Naive thymus-derived CD4-positive, alpha-beta T cell (primary cell): ENCODE measurements at regions of chr9 and their contacts with region 1.

Region 1: DNA sequence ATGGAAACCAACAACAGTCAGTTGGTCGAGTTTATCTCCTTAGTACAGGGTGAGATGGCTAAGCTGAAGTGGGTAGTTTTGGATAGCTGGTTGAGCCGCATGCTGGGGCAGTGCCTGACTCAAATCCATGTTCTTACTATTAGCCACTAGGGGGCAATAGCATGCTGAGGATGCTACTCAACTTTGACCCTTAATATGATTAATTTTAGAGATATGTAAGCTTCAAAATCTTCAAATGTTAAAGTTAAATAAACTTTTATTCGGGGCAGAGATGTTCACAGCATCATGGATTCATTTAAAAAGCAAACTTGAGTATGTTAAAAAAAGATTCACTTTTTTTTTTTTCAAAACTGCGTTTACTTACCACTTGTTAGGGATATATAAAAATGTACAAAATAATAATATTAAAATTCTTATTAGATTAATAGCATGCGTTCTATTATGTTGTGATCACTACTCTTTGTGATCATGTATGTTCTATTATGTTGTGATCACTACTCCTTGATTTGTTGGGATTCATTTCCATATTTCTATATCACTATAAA is 57.0 kb downstream of the C9orf153 start:
- DNase-seq: peak in 6 of 9 donors; percentile 3 to 31 (median 10)
- ATAC-seq: peak; percentile 75
- H3K4me3 ChIP-seq: no peak overlapping the region
- H3K4me3 Mint-ChIP-seq: no peak overlapping the region
- H3K27ac ChIP-seq: no peak overlapping the region
- H3K27ac Mint-ChIP-seq: no peak overlapping the region
- H3K4me1 ChIP-seq: no peaks in the 10 kb centered on the region
- H3K4me1 Mint-ChIP-seq: no peaks in the 10 kb centered on the region
- H3K27me3 ChIP-seq: no peaks in the 10 kb centered on the region
- H3K27me3 Mint-ChIP-seq: peaks cover 0 to 17% (median 6%) of the 10 kb centered on the region in 5 donors

Region 2: GRCh38 chr9:86168256-86168655 is 34.2 kb before region 1 on chr9:
- CTCF ChIA-PET with region 1: no interaction called
- POLR2A ChIA-PET with region 1: no interaction called
- intact Hi-C with region 1: no loop called
- DNase-seq: no peak
- ATAC-seq: no peak
- H3K4me3 ChIP-seq: no peak overlapping the region
- H3K4me3 Mint-ChIP-seq: no peak overlapping the region
- H3K27ac ChIP-seq: no peak overlapping the region
- H3K27ac Mint-ChIP-seq: no peak overlapping the region
- H3K4me1 ChIP-seq: no peaks in the 10 kb centered on the region
- H3K4me1 Mint-ChIP-seq: peaks cover 0 to 1% (median 0%) of the 10 kb centered on the region in 7 donors
- H3K27me3 ChIP-seq: no peaks in the 10 kb centered on the region
- H3K27me3 Mint-ChIP-seq: peaks cover 0 to 8% (median 4%) of the 10 kb centered on the region in 5 donors

Region 3: DNA sequence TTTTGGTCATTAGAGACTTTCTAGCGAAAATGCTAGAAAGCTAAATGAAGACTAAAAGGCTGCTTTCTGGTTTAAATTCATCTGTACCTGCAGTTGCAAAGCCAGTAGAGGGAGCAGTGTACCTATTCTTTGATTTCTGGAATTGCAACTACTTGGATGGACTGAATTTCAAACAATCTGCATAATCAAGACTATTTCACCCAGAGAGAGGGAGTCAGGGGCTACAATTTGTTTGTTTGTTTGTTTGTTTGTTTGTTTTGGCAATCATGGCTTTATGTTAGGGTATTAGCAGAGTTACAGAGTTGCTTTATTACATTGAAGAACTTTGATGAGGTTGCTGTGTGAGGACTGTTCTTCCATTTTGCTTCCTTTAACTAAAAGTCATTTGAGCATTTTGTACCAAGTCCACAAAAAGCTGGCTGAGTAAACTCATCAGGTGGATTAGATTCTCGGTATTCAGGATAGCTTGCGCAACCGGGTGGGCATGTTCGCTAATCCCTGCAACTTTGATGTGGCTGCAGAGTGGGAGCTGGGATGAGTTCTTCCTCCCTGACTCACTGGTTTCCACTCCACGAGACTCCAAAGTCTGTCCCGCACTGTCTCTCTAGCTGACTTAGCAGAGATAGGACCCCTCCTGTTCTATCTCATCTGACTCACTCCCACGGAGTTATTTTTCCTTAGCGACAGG is 231.8 kb after region 1 on chr9:
- CTCF ChIA-PET with region 1: no interaction called
- POLR2A ChIA-PET with region 1: no interaction called
- intact Hi-C with region 1: loop called in 1 of 2 experiments (anchors 5 kb)
- DNase-seq: peak in 5 of 9 donors; percentile 7 to 28 (median 16)
- ATAC-seq: no peak
- H3K4me3 ChIP-seq: no peak overlapping the region
- H3K4me3 Mint-ChIP-seq: no peak overlapping the region
- H3K27ac ChIP-seq: no peak overlapping the region
- H3K27ac Mint-ChIP-seq: no peak overlapping the region
- H3K4me1 ChIP-seq: no peaks in the 10 kb centered on the region
- H3K4me1 Mint-ChIP-seq: no peaks in the 10 kb centered on the region
- H3K27me3 ChIP-seq: peaks cover 0 to 4% of the 10 kb centered on the region in 2 donors
- H3K27me3 Mint-ChIP-seq: peaks cover 2 to 40% (median 31%) of the 10 kb centered on the region in 5 donors

Region 4: DNA sequence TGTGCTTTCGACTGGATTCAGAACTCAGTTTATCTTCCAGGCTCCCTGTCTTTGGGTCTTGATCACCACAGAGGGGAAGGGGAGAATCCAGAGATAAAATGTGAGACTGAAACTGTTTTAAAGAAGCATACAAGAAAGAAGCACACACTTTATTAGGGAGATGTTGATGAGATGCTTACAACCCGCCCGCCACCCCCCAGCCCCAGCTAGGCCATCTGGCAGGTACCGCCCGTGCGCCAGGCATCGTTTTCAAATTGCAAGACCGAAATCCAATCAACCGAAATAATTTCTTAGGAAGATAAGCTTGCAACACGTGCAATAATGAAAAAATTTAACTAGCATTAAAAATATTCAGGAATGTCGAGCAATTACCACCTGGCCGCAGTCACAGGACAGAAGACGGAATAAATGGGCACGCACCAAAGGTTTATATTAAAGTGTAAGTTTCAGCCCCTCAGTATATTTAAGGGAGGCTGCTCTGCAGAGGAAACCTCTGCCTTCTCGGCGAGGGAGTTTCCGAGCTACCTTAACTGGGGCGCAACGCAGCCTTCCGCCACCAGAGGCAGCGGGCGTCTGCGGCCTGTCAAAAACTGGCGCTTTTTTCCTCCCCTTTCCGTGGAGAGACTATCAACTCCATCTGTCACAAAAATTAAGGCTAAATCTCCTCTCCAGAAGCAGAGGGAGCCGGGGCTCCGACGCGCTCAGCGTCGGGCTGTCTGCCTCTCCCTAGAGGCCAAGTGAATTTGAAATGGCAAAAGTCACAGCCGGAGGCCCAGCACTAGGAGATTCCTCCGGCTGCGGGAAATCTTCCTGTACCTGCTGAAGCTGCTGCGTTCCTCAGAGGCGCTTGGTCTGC is 745.9 kb after region 1 on chr9:
- CTCF ChIA-PET with region 1: no interaction called
- POLR2A ChIA-PET with region 1: no interaction called
- intact Hi-C with region 1: loop called in 1 of 2 experiments (anchors 10 kb)
- DNase-seq: peak; percentile 50 to 70 (median 66)
- ATAC-seq: peak; percentile 80
- H3K4me3 ChIP-seq: peak overlapping the region; percentile 47
- H3K4me3 Mint-ChIP-seq: peak overlapping the region; percentile 80 to 95 (median 90)
- H3K27ac ChIP-seq: no peak overlapping the region
- H3K27ac Mint-ChIP-seq: peak overlapping the region in 5 of 9 donors; percentile 13 to 75 (median 52)
- H3K4me1 ChIP-seq: peaks cover 5 to 13% of the 10 kb centered on the region in 2 donors
- H3K4me1 Mint-ChIP-seq: peaks cover 7 to 26% (median 15%) of the 10 kb centered on the region in 7 donors
- H3K27me3 ChIP-seq: peaks cover 6 to 16% of the 10 kb centered on the region in 2 donors
- H3K27me3 Mint-ChIP-seq: peaks cover 12 to 35% (median 19%) of the 10 kb centered on the region in 5 donors